Activated naive CD4-positive, alpha-beta T cell treated with anti-CD3 and anti-CD28 coated beads for 36 hours (primary cell): ENCODE measurements at regions of chr20 and their contacts with region 1.

Region 1: GRCh38 chr20:20489054-20489453 is 121.2 kb downstream of the INSM1 start:
- DNase-seq: no peak
- H3K4me3 Mint-ChIP-seq: peak overlapping the region; percentile 48
- H3K27ac Mint-ChIP-seq: peak overlapping the region; percentile 89
- H3K4me1 Mint-ChIP-seq: peaks cover 50% of the 10 kb centered on the region
- H3K27me3 Mint-ChIP-seq: no peaks in the 10 kb centered on the region

Region 2: GRCh38 chr20:20412750-20413149 is 76.3 kb before region 1 on chr20:
- CTCF ChIA-PET with region 1: interaction called, 3 read pairs
- intact Hi-C with region 1: loop called (anchors 2 kb)
- DNase-seq: peak; percentile 30
- H3K4me3 Mint-ChIP-seq: no peak overlapping the region
- H3K27ac Mint-ChIP-seq: no peak overlapping the region
- H3K4me1 Mint-ChIP-seq: peaks cover 7% of the 10 kb centered on the region
- H3K27me3 Mint-ChIP-seq: no peaks in the 10 kb centered on the region

Region 3: DNA sequence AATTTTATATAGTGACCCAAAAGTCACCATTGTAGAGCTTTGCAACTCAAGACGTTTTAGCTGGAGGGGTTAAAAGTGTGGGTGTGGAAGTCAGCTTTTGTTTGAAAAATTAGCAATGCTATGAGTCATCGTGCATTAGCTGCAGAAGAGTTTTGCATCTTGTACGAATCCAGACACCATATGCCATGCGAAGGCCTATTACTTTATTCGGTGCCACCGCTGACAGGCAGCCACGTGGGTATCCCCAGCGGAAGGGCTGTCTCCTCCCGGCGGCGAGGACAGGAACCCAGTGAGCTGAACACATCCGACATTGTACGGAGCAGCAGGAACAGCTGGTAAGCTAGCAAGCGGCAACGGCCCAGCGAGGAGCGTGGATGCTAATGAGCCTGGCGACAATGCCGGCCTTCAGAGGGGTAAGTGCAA is 36.8 kb before region 1 on chr20:
- CTCF ChIA-PET with region 1: interaction called, 6 read pairs
- intact Hi-C with region 1: loop called (anchors 1 kb)
- DNase-seq: peak; percentile 83
- H3K4me3 Mint-ChIP-seq: peak overlapping the region; percentile 67
- H3K27ac Mint-ChIP-seq: peak overlapping the region; percentile 56
- H3K4me1 Mint-ChIP-seq: peaks cover 36% of the 10 kb centered on the region
- H3K27me3 Mint-ChIP-seq: no peaks in the 10 kb centered on the region

Region 4: GRCh38 chr20:20549718-20550117 is 60.7 kb after region 1 on chr20:
- CTCF ChIA-PET with region 1: no interaction called
- intact Hi-C with region 1: loop called (anchors 5 kb)
- DNase-seq: no peak
- H3K4me3 Mint-ChIP-seq: no peak overlapping the region
- H3K27ac Mint-ChIP-seq: no peak overlapping the region
- H3K4me1 Mint-ChIP-seq: peaks cover 24% of the 10 kb centered on the region
- H3K27me3 Mint-ChIP-seq: no peaks in the 10 kb centered on the region

Region 5: GRCh38 chr20:22160253-22160652 is 1671.2 kb after region 1 on chr20:
- CTCF ChIA-PET with region 1: no interaction called
- intact Hi-C with region 1: no loop called
- DNase-seq: no peak
- H3K4me3 Mint-ChIP-seq: no peak overlapping the region
- H3K27ac Mint-ChIP-seq: no peak overlapping the region
- H3K4me1 Mint-ChIP-seq: no peaks in the 10 kb centered on the region
- H3K27me3 Mint-ChIP-seq: no peaks in the 10 kb centered on the region